ENCODE measurements at regions of chr17 and their contacts with region 1.

Region 1: GRCh38 chr17:41186872-41187271 is 2.2 kb upstream of the KRTAP4-1 start:
- DNase-seq: no peak
- ATAC-seq: no peak
- H3K4me3 ChIP-seq: no peak overlapping the region
- H3K27ac ChIP-seq: no peak overlapping the region
- H3K4me1 ChIP-seq: no peaks in the 10 kb centered on the region
- H3K27me3 ChIP-seq: no peaks in the 10 kb centered on the region
- CTCF ChIP-seq: no peak
- EP300 ChIP-seq: no peak
- POLR2A ChIP-seq: no peak
- RAD21 ChIP-seq: no peak

Region 2: DNA sequence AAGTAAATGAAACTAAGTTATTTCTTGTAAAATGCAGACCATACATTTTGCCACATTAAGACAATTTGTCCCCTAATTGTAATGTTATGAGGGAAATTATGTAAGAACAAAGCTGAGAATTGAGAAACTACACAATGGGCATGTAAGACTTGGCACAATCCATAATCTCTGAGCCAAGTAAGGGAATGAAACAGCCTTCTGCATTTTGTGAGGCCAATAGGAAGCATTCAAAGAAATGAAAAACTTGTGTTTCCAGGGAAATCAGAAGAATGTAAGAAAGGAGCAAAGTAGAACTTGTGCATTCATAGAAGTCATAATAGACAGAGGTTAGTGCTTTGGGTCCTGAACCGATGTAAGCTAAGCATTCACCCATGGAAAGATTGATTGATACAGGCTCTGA is 64.4 kb after region 1 on chr17:
- CTCF ChIA-PET with region 1: no interaction called
- POLR2A ChIA-PET with region 1: no interaction called
- RAD21 ChIA-PET with region 1: no interaction called
- SMC1A ChIA-PET with region 1: no interaction called
- in situ Hi-C with region 1: loop called (anchors 10 kb)
- intact Hi-C with region 1: no loop called
- DNase-seq: no peak
- ATAC-seq: no peak
- H3K4me3 ChIP-seq: no peak overlapping the region
- H3K27ac ChIP-seq: no peak overlapping the region
- H3K4me1 ChIP-seq: no peaks in the 10 kb centered on the region
- H3K27me3 ChIP-seq: no peaks in the 10 kb centered on the region; a peak in 1 of 4 replicates
- CTCF ChIP-seq: no peak
- EP300 ChIP-seq: no peak
- POLR2A ChIP-seq: no peak
- RAD21 ChIP-seq: no peak

Region 3: GRCh38 chr17:41457676-41458075 is 270.8 kb after region 1 on chr17:
- CTCF ChIA-PET with region 1: no interaction called
- POLR2A ChIA-PET with region 1: no interaction called
- RAD21 ChIA-PET with region 1: no interaction called
- SMC1A ChIA-PET with region 1: no interaction called
- in situ Hi-C with region 1: no loop called
- intact Hi-C with region 1: no loop called
- DNase-seq: no peak
- ATAC-seq: no peak
- H3K4me3 ChIP-seq: no peak overlapping the region
- H3K27ac ChIP-seq: no peak overlapping the region
- H3K4me1 ChIP-seq: no peaks in the 10 kb centered on the region
- H3K27me3 ChIP-seq: no peaks in the 10 kb centered on the region; a peak in 1 of 4 replicates
- CTCF ChIP-seq: no peak
- EP300 ChIP-seq: no peak
- POLR2A ChIP-seq: no peak
- RAD21 ChIP-seq: no peak